ENCODE measurements at regions of chr11 and their contacts with region 1.

Region 1: DNA sequence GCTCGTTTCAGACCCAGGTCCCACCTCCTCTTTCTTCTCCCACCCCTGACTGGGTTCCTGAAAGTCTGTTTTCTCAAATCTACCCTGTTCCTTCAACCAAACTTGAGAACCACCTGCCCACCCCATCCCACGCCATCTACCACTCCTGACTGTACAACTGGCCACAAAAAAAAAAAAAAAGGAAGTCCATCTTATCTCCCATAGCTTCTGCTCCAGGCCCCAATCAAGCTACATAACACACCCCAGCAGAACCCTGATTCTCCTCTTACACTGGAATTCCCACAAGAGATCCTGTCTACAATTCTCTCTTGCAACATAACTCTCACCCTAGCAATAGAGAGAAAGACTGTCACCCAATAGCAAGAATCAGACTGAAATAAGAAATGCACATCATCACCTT is 39.2 kb upstream of the CHST1 start:
- DNase-seq: no peak
- H3K4me3 ChIP-seq: no peak overlapping the region
- CTCF ChIP-seq: no peak

Region 2: GRCh38 chr11:45662665-45663485 is 41.8 kb before region 1 on chr11:
- in situ Hi-C with region 1: loop called (anchors 5 kb)
- DNase-seq: peak; percentile 76
- H3K4me3 ChIP-seq: no peak overlapping the region
- CTCF ChIP-seq: no peak